ENCODE measurements at regions of chr3 and their contacts with region 1.

Region 1: GRCh38 chr3:18444595-18445400 is 19.7 kb upstream of the SATB1 start:
- DNase-seq: peak; percentile 88
- ATAC-seq: peak; percentile 98

Region 2: DNA sequence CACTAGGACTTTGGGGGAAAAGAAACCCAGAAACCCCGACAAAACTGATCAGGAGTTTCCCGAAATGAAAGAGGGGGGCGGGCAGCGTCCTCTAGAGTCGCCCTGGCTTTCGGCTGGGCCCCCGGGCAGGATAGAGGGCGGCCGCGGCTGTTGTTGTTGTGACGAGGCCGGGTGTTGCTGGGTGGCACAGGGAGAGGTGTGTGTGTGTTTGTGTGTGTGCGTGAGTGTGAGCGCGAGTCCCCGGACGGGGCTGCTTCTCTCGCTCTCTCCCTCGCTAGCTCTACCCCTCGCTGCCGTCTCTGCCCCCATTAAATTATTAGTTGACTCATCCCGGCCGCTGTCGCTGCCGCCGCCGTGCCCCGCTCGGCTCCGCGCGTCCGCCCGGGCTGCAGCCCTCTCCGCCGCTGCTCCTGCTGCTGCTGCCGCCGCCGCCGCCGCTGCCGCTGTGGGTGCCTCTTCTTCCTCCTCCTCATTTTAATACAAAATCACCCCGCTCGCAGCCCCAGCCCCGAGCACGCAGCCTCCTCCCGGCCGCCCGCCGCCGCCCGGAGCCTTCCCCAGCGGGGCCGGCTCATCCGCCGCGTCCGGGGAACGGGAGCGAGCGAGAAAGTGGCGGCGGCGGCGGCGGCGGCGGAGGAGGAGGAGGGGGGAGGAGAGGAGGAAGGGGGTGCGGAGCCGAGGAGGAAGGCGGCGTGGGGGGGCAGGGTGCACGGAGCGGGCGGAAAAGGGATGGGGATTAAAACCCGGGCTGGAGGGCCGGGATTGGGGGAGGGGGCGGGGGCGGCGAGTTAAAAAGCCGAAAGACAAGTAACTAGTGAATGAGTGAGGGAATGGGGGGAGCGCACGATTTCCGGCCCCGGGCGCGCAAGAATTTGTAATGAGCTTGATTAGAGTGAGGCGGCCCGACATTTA is 19.8 kb before region 1 on chr3 and contains the start of gene SATB1:
- intact Hi-C with region 1: loop called (anchors 2 kb)
- DNase-seq: peak; percentile 92
- ATAC-seq: peak; percentile 90
- total RNA-seq, gene SATB1: 41.6 TPM